ENCODE measurements at regions of chr17 and their contacts with region 1.

Region 1: GRCh38 chr17:72397687-72398086 is 276.9 kb downstream of the SOX9 start:
- DNase-seq: no peak
- ATAC-seq: no peak

Region 2: GRCh38 chr17:71224824-71225575 is 1172.7 kb before region 1 on chr17:
- intact Hi-C with region 1: loop called (anchors 5 kb)
- DNase-seq: no peak
- ATAC-seq: no peak

Region 3: GRCh38 chr17:72754513-72754912 is 356.8 kb after region 1 on chr17:
- intact Hi-C with region 1: no loop called
- DNase-seq: no peak
- ATAC-seq: no peak

Measured in sciatic nerve (tissue), 2 donors.